Motor neuron (in vitro differentiated cells): ENCODE measurements at regions of chr2 and their contacts with region 1.

Region 1: DNA sequence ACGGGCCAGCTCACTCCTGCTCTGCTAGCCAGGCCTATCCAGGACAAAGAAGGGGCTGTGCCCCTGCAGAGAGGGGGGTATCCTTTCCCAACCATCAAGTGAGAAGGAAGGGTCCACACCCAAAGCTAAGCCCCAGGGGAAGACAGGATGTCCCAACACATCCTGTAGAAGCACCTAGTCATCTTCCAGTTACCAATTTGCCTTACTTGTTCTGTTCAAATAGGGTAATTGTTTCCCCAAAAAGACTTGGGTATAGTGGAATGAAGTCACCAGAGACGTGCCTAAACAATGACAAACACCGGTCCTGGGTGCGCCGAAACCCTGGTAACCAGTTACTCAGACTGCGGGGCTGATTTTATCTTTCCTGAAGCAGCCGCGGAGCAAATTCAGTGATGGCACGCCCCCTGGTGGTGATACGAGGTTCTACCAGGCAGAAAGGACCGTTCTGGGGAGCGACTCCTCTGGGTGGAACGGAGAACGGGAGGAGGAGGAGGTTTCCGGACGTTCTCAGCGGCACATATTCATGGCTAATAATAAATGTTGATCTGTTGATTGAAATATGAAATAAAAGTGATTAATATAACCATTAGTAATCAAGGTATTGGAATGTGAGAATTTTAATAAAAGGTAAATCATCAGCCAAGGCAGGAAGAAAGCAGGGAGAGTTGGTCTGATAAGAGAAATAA is 109.3 kb upstream of the STON1 start:
- ATAC-seq: peak; percentile 81 to 95 (median 92)
- H3K4me3 ChIP-seq: no peak overlapping the region
- H3K27ac ChIP-seq: no peak overlapping the region
- H3K4me1 ChIP-seq: peaks cover 9 to 14% of the 10 kb centered on the region in 2 donors

Region 2: DNA sequence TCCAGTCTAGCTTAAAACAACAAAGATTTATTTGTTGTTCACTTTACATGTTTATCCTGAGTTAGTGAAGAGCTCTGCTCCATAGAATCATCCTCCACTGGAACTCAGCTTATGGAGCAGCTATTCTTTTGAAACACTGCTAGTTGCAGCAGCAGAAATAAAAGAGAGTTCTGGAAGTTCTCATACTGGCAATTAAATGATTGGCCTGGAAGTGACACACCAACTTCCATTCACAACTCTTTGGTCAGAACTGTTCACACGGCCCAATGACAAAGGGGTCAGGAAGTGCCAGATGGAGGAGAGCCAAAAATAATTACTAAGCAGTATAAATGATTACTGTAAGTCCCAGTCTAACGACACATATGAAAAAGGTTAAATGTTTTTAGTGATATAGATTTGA is 553.5 kb before region 1 on chr2:
- in situ Hi-C with region 1: loop called in 1 of 9 experiments (anchors 25 kb)
- ATAC-seq: peak in 7 of 8 experiments; percentile 22 to 77 (median 50)
- H3K4me3 ChIP-seq: no peak overlapping the region
- H3K27ac ChIP-seq: no peak overlapping the region
- H3K4me1 ChIP-seq: peaks cover 12 to 14% of the 10 kb centered on the region in 2 donors